PC-9 (cell line): ENCODE measurements at regions of chr17 and their contacts with region 1.

Region 1: GRCh38 chr17:15999439-16000350 is at the starts of genes TTC19 and ZSWIM7:
- DNase-seq: peak; percentile 85 to 98
- H3K4me3 ChIP-seq: peak within 1 kb of the TSS; percentile 85
- H3K27ac ChIP-seq: peak within 1 kb of the TSS; percentile 97
- H3K4me1 ChIP-seq: peaks cover 21% of the 10 kb centered on the region
- H3K27me3 ChIP-seq: no peaks in the 10 kb centered on the region
- CTCF ChIP-seq: no peak
- total RNA-seq, gene TTC19: 53.5 and 74.7 TPM in 2 replicates
- total RNA-seq, gene ZSWIM7: 13.0 and 19.1 TPM in 2 replicates

Region 2: DNA sequence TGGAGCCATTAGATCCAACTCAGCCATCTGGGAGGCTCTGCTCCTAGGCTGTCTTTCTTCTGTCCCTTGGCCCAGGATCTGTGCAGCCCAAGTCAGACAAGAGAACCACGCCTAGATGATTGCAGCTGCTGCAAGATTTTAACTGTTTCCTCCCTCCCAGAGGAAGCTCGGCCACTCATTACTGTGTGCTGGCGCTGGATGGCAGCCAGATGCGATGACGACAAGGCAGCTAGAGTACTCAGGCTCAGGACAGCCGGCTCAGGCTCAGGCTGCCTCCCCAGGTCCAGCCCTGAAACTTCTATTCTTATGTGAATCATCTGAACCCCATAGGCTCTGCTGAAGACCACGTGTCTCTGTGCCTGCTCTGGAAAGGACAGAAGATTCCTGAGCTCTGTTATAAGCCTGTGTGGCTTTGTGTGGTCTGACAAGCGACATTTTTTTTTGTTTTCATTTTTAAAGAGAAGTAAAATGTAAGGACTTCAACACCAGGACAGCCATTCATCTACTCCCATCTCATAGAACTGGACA is 348.0 kb before region 1 on chr17:
- CTCF ChIA-PET with region 1: no interaction called
- POLR2A ChIA-PET with region 1: interaction called, 6 read pairs
- intact Hi-C with region 1: loop called (anchors 2 kb)
- DNase-seq: peak; percentile 96 to 97
- H3K4me3 ChIP-seq: peak overlapping the region; percentile 88
- H3K27ac ChIP-seq: peak overlapping the region; percentile 97
- H3K4me1 ChIP-seq: peaks cover 41% of the 10 kb centered on the region
- H3K27me3 ChIP-seq: no peaks in the 10 kb centered on the region
- CTCF ChIP-seq: no peak

Region 3: GRCh38 chr17:15920758-15921239 is 78.9 kb before region 1 on chr17:
- CTCF ChIA-PET with region 1: no interaction called
- POLR2A ChIA-PET with region 1: interaction called, 6 read pairs
- intact Hi-C with region 1: loop called (anchors 2 kb)
- DNase-seq: peak; percentile 96
- H3K4me3 ChIP-seq: no peak overlapping the region
- H3K27ac ChIP-seq: peak overlapping the region; percentile 95
- H3K4me1 ChIP-seq: peaks cover 41% of the 10 kb centered on the region
- H3K27me3 ChIP-seq: no peaks in the 10 kb centered on the region
- CTCF ChIP-seq: no peak

Region 4: GRCh38 chr17:15954222-15954621 is 45.5 kb before region 1 on chr17:
- CTCF ChIA-PET with region 1: no interaction called
- POLR2A ChIA-PET with region 1: interaction called, 19 read pairs
- intact Hi-C with region 1: loop called (anchors 1 kb)
- DNase-seq: peak; percentile 81 to 91
- H3K4me3 ChIP-seq: no peak overlapping the region
- H3K27ac ChIP-seq: peak overlapping the region; percentile 71
- H3K4me1 ChIP-seq: peaks cover 48% of the 10 kb centered on the region
- H3K27me3 ChIP-seq: no peaks in the 10 kb centered on the region
- CTCF ChIP-seq: no peak

Region 5: DNA sequence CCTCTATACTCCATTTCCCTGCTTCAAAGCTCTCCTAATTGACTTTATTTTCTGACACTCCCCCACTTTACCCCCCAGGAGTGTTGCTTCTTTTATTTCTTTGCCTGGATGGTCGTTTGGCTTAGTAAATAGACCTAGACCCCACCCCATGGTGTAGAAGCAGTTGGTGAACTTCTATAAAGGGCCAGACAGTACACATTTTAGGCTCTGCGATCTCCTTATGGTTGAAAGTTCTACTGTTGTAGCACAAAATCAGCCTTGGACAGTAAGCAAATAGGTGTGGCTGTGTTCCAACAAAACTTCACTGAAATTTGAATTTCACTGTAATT is 537.4 kb after region 1 on chr17:
- CTCF ChIA-PET with region 1: no interaction called
- POLR2A ChIA-PET with region 1: interaction called, 15 read pairs
- intact Hi-C with region 1: no loop called
- DNase-seq: no peak
- H3K4me3 ChIP-seq: no peak overlapping the region; the same call in 1 of the 2 replicates
- H3K27ac ChIP-seq: no peak overlapping the region
- H3K4me1 ChIP-seq: no peaks in the 10 kb centered on the region
- H3K27me3 ChIP-seq: no peaks in the 10 kb centered on the region
- CTCF ChIP-seq: 0 out of 2 replicates have a peak, but pooled peaks have one; percentile 7